ENCODE measurements at regions of chr12 and their contacts with region 1.

Region 1: DNA sequence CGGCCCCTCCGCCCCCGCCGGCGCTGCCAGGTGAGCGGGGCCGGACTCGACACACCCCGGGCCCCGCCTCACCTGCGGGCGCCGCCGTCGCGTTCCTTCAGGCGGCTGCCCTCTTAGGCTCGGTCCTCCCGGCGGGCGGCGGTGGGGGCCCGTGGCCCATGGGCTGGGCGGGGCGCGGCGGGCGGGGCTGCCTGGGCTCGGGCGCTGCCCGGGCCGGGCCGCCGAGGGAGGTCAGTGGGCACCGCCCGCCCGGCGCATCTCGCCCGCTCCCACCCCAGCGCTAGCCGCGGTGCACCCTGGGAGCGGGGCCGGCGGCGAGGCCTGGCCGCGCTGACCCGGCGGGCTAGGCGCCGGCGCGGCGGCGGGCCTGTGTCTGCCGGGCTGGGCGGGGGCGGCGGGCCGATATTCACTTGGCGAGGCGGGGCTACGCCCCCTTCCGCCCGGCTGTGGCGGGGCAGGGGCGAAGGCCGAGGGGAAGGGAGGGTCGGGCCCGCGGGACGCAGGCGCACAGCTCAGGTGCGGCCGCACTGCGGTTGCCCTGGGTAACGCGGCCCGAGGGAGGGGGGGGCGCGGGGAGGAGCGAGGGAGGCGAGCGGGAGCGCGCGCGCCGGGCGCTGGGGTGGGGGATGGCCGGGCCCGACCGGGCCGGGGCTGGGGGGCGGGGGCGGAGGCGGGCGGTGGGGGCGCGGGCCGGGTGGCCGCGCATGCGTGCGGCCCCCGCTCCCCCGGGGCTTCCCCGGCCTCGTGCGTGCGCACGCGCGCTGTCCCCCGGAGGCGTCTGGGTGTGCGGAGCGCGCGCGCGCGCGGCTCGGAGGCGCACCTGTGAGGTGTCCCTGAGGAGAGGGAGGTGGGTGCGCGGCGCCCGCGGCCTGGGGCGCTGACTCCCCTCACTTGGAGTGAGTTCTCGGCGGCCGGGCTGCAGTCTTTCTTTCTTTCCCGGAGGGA is at the starts of genes CCDC92 and ZNF664:
- DNase-seq: peak; percentile 90
- ATAC-seq: peak; percentile 86
- H3K4me3 ChIP-seq: peak within 1 kb of the TSS; percentile 94
- H3K27ac ChIP-seq: peak within 1 kb of the TSS; percentile 72
- H3K4me1 ChIP-seq: peaks cover 4% of the 10 kb centered on the region
- H3K27me3 ChIP-seq: no peaks in the 10 kb centered on the region
- CTCF ChIP-seq: peak; percentile 49
- POLR2A ChIP-seq: peak; percentile 57; the same call in 1 of the 2 replicates
- RAD21 ChIP-seq: 0 out of 2 replicates have a peak, but pooled peaks have one; percentile 18
- total RNA-seq, gene CCDC92: 5.7 and 8.1 TPM in 2 replicates
- total RNA-seq, gene ZNF664: 32.6 and 36.7 TPM in 2 replicates

Region 2: DNA sequence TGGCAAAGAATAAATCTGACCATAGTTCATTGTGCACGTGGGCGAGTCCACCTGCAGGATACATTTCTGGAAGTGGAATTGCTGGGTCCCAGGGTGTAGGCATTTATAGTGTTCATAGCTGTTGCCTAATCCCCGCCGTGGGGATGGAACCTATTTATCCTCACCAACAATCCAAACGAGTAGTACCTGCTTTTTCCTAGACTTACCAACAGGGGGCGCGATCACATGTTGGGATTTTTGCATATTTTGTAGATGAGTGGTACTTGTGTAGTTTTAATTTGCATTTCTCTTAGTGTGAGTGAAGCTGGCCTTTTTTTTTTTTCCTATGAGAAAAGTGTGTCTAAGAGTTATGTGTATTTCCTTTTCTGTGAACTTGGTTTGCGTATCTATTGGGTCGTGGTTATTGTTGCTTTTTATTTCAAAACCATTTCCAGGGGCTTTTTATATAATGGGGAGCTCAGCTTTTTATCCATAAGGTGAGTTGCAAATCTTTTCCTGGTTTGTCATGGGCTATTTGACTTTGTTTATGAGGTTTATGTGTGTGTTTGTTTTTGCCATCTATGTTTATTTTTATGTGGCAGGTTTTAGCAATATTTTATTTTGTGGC is 67.3 kb before region 1 on chr12:
- CTCF ChIA-PET with region 1: interaction called, 3 read pairs
- POLR2A ChIA-PET with region 1: no interaction called
- dilution Hi-C with region 1: no loop called
- in situ Hi-C with region 1: loop called (anchors 5 kb)
- intact Hi-C with region 1: loop called (anchors 2 kb)
- DNase-seq: peak; percentile 81
- ATAC-seq: peak; percentile 63
- H3K4me3 ChIP-seq: no peak overlapping the region
- H3K27ac ChIP-seq: no peak overlapping the region
- H3K4me1 ChIP-seq: peaks cover 8% of the 10 kb centered on the region
- H3K27me3 ChIP-seq: no peaks in the 10 kb centered on the region; the same call in 1 of the 2 replicates
- CTCF ChIP-seq: peak; percentile 78
- POLR2A ChIP-seq: no peak
- RAD21 ChIP-seq: peak; percentile 53

Measured in IMR-90 (cell line).